GM18951 (cell line): ENCODE measurements at regions of chr5 and their contacts with region 1.

Region 1: DNA sequence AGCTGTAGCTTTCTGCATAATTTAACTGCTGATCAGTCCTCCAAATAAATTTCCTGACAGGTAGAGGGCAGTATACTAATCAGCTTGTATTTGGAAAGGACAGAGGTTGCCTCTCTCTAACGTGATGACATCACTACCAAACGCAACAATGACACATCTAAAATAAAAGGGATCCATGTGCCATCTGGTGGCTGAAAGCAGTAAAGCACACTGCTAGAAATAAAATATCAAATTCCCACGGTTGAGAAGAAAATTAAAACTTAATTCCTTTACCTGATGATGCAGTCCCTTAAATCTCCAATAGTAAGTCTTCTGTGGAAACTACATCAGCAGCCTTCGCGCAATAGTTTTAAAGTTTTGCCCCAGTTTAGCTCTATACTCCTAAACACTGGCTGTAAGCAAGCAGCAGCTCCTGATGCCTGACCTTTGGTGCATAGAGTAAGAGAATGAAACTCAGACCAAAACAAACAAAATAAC is 54.5 kb downstream of the DIAPH1 start:
- POLR2A ChIP-seq: no peak

Region 2: DNA sequence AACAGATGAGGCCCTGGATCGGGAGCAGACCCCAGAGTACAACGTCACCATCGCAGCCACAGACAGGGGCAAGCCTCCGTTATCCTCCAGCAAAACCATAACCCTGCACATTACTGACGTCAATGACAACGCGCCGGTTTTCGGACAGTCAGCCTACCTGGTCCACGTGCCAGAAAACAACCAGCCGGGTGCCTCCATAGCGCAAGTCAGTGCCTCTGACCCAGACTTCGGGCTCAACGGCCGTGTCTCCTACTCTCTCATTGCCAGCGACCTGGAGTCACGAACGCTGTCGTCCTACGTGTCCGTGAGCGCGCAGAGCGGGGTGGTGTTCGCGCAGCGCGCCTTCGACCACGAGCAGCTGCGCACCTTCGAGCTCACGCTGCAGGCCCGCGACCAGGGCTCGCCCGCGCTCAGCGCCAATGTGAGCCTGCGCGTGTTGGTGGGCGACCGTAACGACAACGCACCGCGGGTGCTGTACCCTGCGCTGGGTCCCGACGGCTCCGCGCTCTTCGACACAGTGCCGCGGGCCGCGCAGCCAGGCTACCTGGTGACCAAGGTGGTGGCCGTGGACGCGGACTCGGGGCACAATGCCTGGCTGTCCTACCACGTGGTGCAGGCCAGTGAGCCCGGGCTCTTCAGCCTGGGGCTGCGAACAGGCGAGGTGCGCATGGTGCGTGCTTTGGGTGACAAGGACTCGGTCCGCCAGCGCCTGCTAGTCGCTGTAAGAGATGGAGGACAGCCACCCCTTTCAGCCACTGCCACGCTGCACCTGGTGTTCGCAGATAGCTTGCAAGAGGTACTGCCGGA is 145.0 kb before region 1 on chr5:
- in situ Hi-C with region 1: loop called (anchors 5 kb)
- POLR2A ChIP-seq: no peak

Region 3: DNA sequence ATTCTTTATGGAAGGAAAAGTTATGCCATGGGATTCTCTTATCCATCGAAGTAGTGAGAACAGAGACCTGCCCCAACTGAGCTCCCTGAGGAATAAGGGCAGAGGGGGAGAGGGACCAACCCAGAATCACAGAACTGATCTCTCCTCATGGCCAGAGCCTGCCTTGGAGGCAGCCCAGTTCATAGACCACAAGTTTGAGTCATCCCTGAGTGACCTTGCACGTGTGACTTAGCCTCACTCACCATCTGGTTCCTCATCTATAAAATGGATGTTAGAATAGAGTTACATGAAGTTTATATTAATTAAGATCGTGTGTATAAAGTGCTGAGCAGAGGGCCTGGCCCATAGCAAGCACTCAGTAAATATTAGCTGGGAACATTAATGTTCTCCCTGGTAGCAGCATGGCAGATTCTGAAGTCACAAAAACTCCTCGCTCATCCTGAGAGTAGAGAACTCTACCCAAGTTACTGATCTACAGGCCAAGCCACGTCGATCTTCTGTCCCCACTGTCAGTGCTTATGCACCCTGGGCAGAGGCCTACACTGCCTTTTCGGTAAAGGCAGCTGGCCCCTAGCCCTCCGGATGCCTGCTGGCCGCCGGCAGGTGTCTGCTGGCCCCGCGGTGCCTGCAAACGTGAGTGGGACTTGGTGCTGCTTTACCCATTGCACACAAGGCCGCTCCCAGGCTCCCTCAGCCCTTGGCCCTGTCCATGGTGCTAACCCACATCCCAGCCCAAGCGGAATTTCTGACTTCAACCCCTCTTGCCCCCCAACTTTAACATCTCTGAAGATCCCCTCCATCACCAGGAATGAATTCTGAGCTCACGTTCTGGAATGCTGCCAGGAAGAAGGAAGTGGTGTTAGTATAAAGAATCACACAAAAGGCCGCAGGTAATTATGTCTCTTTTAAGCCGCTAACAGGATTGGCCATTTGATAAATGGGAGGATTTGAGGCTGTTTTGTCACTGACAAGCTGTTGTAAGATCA is 178.9 kb after region 1 on chr5:
- in situ Hi-C with region 1: no loop called
- POLR2A ChIP-seq: no peak